ENCODE measurements at regions of chr15 and their contacts with region 1.

Region 1: DNA sequence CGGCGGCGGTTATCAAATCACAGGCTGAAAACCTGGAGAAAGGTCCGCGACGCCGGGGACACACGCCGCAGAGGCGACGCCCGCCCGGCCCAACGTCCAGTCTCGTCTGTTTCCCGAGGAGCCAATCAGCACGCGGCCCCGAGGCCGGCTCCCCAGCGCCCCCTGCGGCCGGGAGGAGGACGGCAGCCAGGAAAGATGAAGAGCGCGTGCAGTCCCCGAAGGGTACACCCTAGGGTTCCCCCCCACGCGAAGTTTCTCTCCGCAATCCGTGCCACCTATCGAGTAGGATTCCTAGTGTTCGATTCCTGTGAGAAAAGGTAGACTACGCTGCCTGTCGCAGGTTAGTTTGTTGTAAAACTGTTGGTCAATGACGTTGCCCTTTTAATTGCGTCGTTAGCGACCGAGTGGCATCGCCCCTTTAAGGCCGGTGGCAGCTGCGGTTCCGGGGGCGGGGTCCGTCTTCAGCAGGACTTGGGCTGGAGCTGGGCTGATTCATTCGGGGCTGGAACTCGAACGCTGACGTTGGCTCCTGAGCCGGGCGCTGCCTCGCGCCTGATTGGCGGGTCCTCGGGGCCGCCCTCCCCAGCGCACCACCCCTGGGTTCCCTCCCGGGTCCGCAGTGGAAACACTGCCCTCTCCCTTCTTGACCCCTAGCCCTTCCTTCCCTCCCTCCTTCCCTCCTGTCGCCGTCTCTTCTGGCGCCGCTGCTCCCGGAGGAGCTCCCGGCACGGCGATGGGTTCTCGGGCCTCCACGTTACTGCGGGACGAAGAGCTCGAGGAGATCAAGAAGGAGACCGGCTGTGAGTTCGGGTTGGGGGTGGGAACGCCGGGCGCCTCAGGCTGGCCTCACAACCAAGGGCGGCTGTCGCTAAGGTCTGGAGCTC is at the starts of genes CHP1 and EXD1:
- DNase-seq: peak; percentile 93 to 95 (median 94)
- H3K4me3 ChIP-seq: peak within 1 kb of the TSS; percentile 77 to 83
- H3K4me3 Mint-ChIP-seq: peak within 1 kb of the TSS; percentile 89 to 93 (median 90)
- H3K27ac ChIP-seq: peak within 1 kb of the TSS; percentile 81
- H3K27ac Mint-ChIP-seq: peak within 1 kb of the TSS; percentile 94 to 98 (median 97)
- H3K4me1 ChIP-seq: peaks cover 28% of the 10 kb centered on the region
- H3K4me1 Mint-ChIP-seq: peaks cover 21 to 42% (median 26%) of the 10 kb centered on the region in 4 donors
- H3K27me3 ChIP-seq: no peaks in the 10 kb centered on the region
- H3K27me3 Mint-ChIP-seq: peaks cover 0 to 1% of the 10 kb centered on the region in 2 donors
- total RNA-seq, gene CHP1: 26.4 to 27.1 TPM
- total RNA-seq, gene EXD1: not detected

Region 2: GRCh38 chr15:40323239-40323952 is 907.5 kb before region 1 on chr15 and contains the start of gene INAFM2:
- CTCF ChIA-PET with region 1: no interaction called
- POLR2A ChIA-PET with region 1: no interaction called
- intact Hi-C with region 1: loop called (anchors 5 kb)
- DNase-seq: peak; percentile 88 to 90 (median 89)
- H3K4me3 ChIP-seq: peak within 1 kb of the TSS in 1 of 2 donors; percentile 56
- H3K4me3 Mint-ChIP-seq: peak within 1 kb of the TSS; percentile 79 to 89 (median 86)
- H3K27ac ChIP-seq: peak within 1 kb of the TSS; percentile 29
- H3K27ac Mint-ChIP-seq: peak within 1 kb of the TSS; percentile 36 to 93 (median 88)
- H3K4me1 ChIP-seq: peaks cover 22% of the 10 kb centered on the region
- H3K4me1 Mint-ChIP-seq: peaks cover 16 to 35% (median 25%) of the 10 kb centered on the region in 4 donors
- H3K27me3 ChIP-seq: no peaks in the 10 kb centered on the region
- H3K27me3 Mint-ChIP-seq: peaks cover 0 to 7% of the 10 kb centered on the region in 2 donors
- total RNA-seq, gene INAFM2: 7.2 to 7.5 TPM

Region 3: DNA sequence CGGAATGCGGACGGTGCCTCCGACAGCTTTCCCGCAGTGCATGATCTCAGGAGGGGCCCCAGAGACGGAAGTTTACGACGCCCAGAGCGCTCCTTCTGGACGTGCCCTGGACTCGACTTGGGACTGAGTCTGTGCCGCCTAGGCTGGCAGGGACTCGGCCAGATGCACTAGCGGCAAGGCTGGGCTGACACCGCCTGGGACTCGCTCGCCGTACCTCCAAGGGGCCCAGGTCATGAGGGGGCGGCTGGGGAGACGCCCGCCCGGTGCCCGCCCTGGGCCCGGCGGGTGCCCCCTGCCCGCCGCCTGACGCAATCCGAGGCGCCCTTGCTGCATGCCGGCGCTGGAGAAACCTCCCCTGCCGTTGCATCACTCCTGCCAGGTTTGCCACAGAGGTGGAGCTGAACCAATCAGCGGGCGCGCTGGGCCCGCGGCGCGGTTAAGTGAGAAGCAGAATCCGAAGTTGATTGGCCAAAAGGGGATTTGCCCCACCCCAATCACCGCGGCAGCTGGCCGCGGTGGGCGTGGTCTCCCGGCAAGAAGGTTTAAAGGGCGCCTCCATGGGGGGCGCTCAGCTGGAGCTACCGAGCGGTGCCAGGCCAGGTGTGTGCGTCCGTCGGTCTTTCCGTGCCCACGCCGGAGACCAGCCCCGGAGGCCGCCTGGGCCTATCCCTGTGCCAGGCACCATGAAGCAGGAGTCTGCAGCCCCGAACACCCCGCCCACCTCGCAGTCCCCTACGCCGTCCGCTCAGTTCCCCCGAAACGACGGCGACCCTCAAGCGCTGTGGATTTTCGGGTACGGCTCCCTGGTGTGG is 277.8 kb before region 1 on chr15 and contains the start of gene CHAC1:
- CTCF ChIA-PET with region 1: interaction called, 3 read pairs
- POLR2A ChIA-PET with region 1: interaction called, 5 read pairs
- intact Hi-C with region 1: loop called (anchors 1 kb)
- DNase-seq: peak; percentile 94 to 97 (median 94)
- H3K4me3 ChIP-seq: peak within 1 kb of the TSS; percentile 69 to 79
- H3K4me3 Mint-ChIP-seq: peak within 1 kb of the TSS; percentile 91 to 98 (median 94)
- H3K27ac ChIP-seq: peak within 1 kb of the TSS; percentile 42
- H3K27ac Mint-ChIP-seq: peak within 1 kb of the TSS; percentile 82 to 94 (median 88)
- H3K4me1 ChIP-seq: peaks cover 14% of the 10 kb centered on the region
- H3K4me1 Mint-ChIP-seq: peaks cover 5 to 22% (median 16%) of the 10 kb centered on the region in 4 donors
- H3K27me3 ChIP-seq: no peaks in the 10 kb centered on the region
- H3K27me3 Mint-ChIP-seq: peaks cover 0 to 2% of the 10 kb centered on the region in 2 donors
- total RNA-seq, gene CHAC1: 1.2 TPM

Region 4: GRCh38 chr15:41116116-41116871 is 114.6 kb before region 1 on chr15 and contains the start of gene INO80:
- CTCF ChIA-PET with region 1: interaction called, 3 read pairs
- POLR2A ChIA-PET with region 1: interaction called, 24 read pairs
- intact Hi-C with region 1: loop called (anchors 1 kb)
- DNase-seq: peak; percentile 96 to 97 (median 97)
- H3K4me3 ChIP-seq: peak within 1 kb of the TSS; percentile 95 to 100
- H3K4me3 Mint-ChIP-seq: peak within 1 kb of the TSS; percentile 93 to 99 (median 96)
- H3K27ac ChIP-seq: peak within 1 kb of the TSS; percentile 84
- H3K27ac Mint-ChIP-seq: peak within 1 kb of the TSS; percentile 87 to 100 (median 99)
- H3K4me1 ChIP-seq: peaks cover 31% of the 10 kb centered on the region
- H3K4me1 Mint-ChIP-seq: peaks cover 15 to 36% (median 26%) of the 10 kb centered on the region in 4 donors
- H3K27me3 ChIP-seq: no peaks in the 10 kb centered on the region
- H3K27me3 Mint-ChIP-seq: peaks cover 0 to 2% of the 10 kb centered on the region in 2 donors
- total RNA-seq, gene INO80: 29.7 to 34.4 TPM

Region 5: DNA sequence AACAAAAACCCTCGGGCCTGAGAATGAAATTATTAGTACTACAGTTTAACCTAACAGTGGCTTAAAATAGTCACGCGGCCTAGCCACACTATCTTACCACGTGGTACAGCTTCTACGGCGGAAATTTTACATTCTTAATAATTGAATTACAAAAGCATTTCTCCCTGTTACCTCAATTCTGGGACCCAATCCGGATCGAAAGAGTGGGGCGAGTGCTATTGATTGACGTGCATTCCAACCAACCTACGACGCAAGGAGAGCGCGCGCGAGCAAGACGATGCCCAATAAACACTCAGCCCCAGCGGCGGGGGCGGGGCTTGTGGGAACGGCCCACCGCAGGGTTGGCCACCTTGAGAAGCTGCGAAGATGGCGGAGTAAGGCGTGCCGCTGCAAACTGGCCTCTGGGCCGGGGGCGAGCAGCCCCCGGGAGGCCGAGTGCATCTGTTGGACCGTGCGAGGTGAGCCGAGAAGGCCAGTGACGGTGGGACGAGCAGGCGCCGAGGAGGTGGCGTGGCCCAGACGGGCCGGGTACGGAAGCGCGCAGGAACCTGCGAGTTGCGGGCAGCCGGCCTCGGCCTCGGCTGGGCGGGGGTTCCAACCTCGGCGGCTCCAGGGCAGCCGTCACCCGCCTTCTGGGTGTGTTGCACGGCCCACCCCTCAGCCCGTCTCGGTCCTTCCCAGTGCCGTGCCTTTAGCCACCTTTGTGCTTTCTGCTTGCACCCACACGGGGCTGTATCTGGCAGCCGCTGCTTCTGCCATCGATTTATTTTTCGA is 52.9 kb after region 1 on chr15:
- CTCF ChIA-PET with region 1: interaction called, 6 read pairs
- POLR2A ChIA-PET with region 1: interaction called, 21 read pairs
- intact Hi-C with region 1: loop called (anchors 1 kb)
- DNase-seq: peak; percentile 97 to 98 (median 98)
- H3K4me3 ChIP-seq: peak overlapping the region; percentile 91 to 97
- H3K4me3 Mint-ChIP-seq: peak overlapping the region; percentile 93 to 99 (median 98)
- H3K27ac ChIP-seq: peak overlapping the region; percentile 86
- H3K27ac Mint-ChIP-seq: peak overlapping the region; percentile 92 to 99 (median 99)
- H3K4me1 ChIP-seq: peaks cover 43% of the 10 kb centered on the region
- H3K4me1 Mint-ChIP-seq: peaks cover 28 to 53% (median 41%) of the 10 kb centered on the region in 4 donors
- H3K27me3 ChIP-seq: no peaks in the 10 kb centered on the region
- H3K27me3 Mint-ChIP-seq: no peaks in the 10 kb centered on the region

Region 6: DNA sequence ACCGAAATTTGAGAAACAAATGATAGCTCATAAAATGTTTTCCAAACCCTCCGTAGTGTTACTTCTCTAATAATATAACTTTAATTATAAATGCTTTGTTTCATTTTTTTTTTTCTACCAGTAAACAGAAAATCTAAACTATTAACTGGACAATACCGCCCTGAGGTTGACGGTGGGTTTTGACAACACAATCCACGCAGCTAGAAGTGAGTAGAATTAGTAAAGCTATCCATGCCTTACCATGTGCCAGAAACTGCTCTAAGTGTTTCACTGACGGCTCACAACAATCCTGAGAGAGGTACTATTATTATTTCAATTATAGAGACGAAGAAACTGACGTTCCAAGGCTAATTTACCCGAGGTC is 171.0 kb after region 1 on chr15:
- CTCF ChIA-PET with region 1: interaction called, 3 read pairs
- POLR2A ChIA-PET with region 1: interaction called, 5 read pairs
- intact Hi-C with region 1: loop called (anchors 2 kb)
- DNase-seq: no peak
- H3K4me3 ChIP-seq: peak overlapping the region; percentile 74 to 87
- H3K4me3 Mint-ChIP-seq: peak overlapping the region; percentile 88 to 99 (median 95)
- H3K27ac ChIP-seq: peak overlapping the region; percentile 69
- H3K27ac Mint-ChIP-seq: peak overlapping the region; percentile 92 to 97 (median 96)
- H3K4me1 ChIP-seq: peaks cover 17% of the 10 kb centered on the region
- H3K4me1 Mint-ChIP-seq: peaks cover 8 to 33% (median 15%) of the 10 kb centered on the region in 4 donors
- H3K27me3 ChIP-seq: no peaks in the 10 kb centered on the region
- H3K27me3 Mint-ChIP-seq: no peaks in the 10 kb centered on the region

Region 7: DNA sequence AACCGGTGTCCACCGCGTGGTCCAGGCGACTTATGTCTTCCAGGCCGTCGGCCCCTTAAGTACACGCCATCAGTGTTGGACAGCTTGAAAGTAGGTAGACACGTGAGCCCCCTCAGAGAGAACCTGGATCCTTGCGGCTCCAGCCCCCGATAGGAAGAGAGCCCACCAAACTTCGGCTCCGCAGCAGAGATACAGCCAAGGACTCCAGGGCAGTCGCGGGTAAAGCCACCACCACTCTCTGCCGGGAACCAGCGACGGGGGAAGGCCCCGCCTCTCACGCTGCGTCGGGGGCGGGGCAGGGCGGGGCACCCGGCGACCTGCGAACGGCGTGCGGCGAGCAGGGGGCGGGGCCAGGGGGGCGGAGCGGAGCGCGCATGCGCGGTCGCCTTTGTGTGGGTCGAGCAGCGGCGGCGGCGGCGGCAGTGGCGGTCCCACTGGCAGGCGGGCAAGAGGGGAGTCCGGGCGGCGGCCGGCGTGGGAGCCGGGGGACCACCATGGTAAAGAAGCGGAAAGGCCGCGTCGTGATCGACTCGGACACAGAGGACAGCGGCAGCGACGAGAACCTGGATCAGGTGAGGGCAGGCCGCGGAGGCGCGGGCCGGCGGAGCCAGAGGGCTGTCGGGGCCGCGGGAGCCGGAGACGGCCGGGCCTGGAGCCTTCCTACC is 186.0 kb after region 1 on chr15 and contains the start of gene RTF1:
- CTCF ChIA-PET with region 1: no interaction called
- POLR2A ChIA-PET with region 1: no interaction called
- intact Hi-C with region 1: loop called (anchors 2 kb)
- DNase-seq: peak; percentile 93 to 98 (median 96)
- H3K4me3 ChIP-seq: peak within 1 kb of the TSS; percentile 91 to 100
- H3K4me3 Mint-ChIP-seq: peak within 1 kb of the TSS; percentile 91 to 96 (median 96)
- H3K27ac ChIP-seq: peak within 1 kb of the TSS; percentile 72
- H3K27ac Mint-ChIP-seq: peak within 1 kb of the TSS; percentile 86 to 98 (median 96)
- H3K4me1 ChIP-seq: peaks cover 34% of the 10 kb centered on the region
- H3K4me1 Mint-ChIP-seq: peaks cover 24 to 55% (median 38%) of the 10 kb centered on the region in 4 donors
- H3K27me3 ChIP-seq: no peaks in the 10 kb centered on the region
- H3K27me3 Mint-ChIP-seq: no peaks in the 10 kb centered on the region
- total RNA-seq, gene RTF1: 31.9 to 35.9 TPM